ENCODE measurements at regions of chr3 and their contacts with region 1.

Region 1: GRCh38 chr3:161081633-161082032 is 23.5 kb downstream of the B3GALNT1 start:
- DNase-seq: no peak
- H3K4me3 ChIP-seq: no peak overlapping the region
- H3K27ac ChIP-seq: no peak overlapping the region
- H3K4me1 ChIP-seq: no peaks in the 10 kb centered on the region
- H3K27me3 ChIP-seq: no peaks in the 10 kb centered on the region
- CTCF ChIP-seq: no peak
- POLR2A ChIP-seq: no peak

Region 2: DNA sequence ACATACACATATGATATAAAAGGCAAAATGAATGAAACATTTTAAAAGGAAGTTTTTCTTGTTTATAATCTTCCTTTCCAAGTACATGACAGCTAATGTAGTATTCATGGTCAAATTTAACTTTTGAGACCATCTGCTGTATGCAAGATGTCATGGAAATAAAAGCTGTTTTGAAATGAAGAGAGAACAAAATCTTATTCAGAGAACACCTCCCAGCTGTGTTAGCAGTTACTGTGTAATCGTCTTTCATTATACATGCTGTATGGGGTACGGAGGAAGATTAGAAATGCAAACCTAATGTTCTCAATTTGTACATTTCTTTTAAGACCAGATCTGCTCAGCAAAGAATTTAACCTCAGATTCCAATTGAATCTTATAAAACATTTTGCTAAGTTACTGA is 1597.3 kb after region 1 on chr3:
- intact Hi-C with region 1: loop called (anchors 10 kb)
- DNase-seq: no peak
- H3K4me3 ChIP-seq: no peak overlapping the region
- H3K27ac ChIP-seq: no peak overlapping the region
- H3K4me1 ChIP-seq: no peaks in the 10 kb centered on the region
- H3K27me3 ChIP-seq: no peaks in the 10 kb centered on the region
- CTCF ChIP-seq: no peak
- POLR2A ChIP-seq: no peak